Left ventricle myocardium inferior (tissue), 1 donor: ENCODE measurements at regions of chr3 and their contacts with region 1.

Region 1: GRCh38 chr3:15427182-15427880 is at the starts of genes EAF1 and METTL6:
- DNase-seq: peak; percentile 87
- H3K4me3 ChIP-seq: peak within 1 kb of the TSS; percentile 96
- H3K27ac ChIP-seq: peak within 1 kb of the TSS; percentile 84
- H3K4me1 ChIP-seq: peaks cover 76% of the 10 kb centered on the region
- H3K27me3 ChIP-seq: no peaks in the 10 kb centered on the region
- CTCF ChIP-seq: peak; percentile 42
- total RNA-seq, gene EAF1: 7.6 TPM
- total RNA-seq, gene METTL6: 11.3 TPM

Region 2: DNA sequence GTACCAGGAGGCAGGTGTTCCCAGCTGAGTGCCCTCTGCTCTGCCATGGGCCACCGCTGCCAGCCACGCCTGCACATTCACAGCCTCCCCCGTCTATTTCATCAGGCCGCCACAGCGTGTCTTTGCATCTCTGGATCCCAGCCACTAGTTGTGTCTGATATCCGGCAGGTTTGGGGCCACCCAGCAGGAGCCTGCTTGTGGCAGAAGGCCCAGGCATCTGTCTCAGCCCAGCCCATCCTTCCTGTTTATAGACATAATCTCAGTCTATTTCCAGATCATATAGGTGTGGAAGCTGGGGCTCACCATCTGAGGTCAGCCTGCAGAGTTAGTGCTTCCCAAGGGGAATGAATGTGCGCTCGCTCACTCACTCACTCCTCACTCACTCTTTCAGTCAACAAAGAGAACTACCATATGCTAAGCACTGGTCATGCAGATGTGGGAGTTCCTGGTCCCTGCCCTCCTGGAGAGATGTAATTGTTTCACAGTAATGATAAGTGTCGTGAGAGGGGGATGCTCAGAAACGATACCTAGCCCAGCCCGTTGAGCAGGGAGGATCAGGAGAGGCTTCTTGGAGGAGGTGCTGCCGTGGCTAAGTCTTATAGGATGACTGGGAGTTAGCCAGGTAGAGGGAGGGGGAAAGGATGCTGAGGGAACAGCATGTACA is 548.0 kb before region 1 on chr3:
- intact Hi-C with region 1: no loop called
- DNase-seq: peak; percentile 39
- H3K4me3 ChIP-seq: no peak overlapping the region
- H3K27ac ChIP-seq: peak overlapping the region; percentile 78
- H3K4me1 ChIP-seq: peaks cover 62% of the 10 kb centered on the region
- H3K27me3 ChIP-seq: no peaks in the 10 kb centered on the region
- CTCF ChIP-seq: no peak

Region 3: DNA sequence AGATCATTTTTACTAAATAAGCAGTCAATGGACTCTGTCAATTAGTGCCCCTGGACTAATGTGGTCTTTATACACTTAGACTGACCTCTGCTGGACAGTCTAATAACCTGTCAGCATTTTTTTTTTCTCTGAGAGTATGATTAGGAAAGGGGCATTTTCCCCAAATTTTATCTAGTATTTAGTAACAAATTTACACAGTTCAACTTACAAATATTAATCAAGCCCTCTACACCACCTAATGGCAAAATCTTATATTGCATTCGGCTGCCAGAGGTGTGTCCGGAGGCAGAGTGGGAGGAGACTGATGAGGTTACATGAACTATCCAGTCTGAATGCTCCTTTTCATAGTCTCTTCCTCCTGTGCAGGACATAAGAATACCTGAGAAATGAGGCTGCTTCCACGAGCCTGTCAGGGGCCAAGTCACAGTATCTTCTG is 130.2 kb after region 1 on chr3:
- intact Hi-C with region 1: loop called (anchors 10 kb)
- DNase-seq: no peak
- H3K4me3 ChIP-seq: no peak overlapping the region
- H3K27ac ChIP-seq: no peak overlapping the region
- H3K4me1 ChIP-seq: no peaks in the 10 kb centered on the region
- H3K27me3 ChIP-seq: no peaks in the 10 kb centered on the region
- CTCF ChIP-seq: peak; percentile 75